Posterior vena cava (tissue), 2 donors: ENCODE measurements at regions of chr2 and their contacts with region 1.

Region 1: GRCh38 chr2:36266536-36267121 is 88.9 kb upstream of the CRIM1 start:
- DNase-seq: no peak

Region 2: GRCh38 chr2:36203366-36203765 is 63.3 kb before region 1 on chr2:
- intact Hi-C with region 1: loop called in 1 of 2 experiments (anchors 2 kb)
- DNase-seq: no peak

Region 3: DNA sequence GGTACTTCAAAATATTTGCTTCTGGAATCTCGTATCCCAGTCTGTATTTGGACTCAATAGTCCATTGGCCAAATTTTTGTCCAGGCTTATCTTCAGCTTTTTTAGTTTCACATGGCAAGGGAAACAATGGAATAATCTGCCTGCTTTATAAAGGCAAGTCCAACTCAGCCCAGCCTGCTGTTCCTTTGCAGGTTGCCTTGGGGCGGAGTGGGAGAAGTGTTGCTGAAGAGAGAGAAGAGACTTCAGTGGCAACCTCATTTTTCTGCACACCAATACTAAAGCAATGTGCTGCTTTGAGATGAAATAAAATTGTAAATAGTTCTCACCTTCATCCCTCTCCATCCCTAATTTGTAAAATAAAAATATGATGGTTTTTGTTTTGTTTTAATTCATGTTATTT is 14.7 kb before region 1 on chr2:
- intact Hi-C with region 1: loop called in 1 of 2 experiments (anchors 1 kb)
- DNase-seq: no peak